Left cardiac atrium (tissue), 4 donors: ENCODE measurements at regions of chr17 and their contacts with region 1.

Region 1: GRCh38 chr17:34542700-34543336 is 36.6 kb upstream of the TMEM132E start:
- DNase-seq: peak; percentile 24
- ATAC-seq: no peak

Region 2: GRCh38 chr17:34337701-34338100 is 205.1 kb before region 1 on chr17:
- intact Hi-C with region 1: no loop called
- DNase-seq: no peak
- ATAC-seq: no peak

Region 3: GRCh38 chr17:34892461-34893249 is 349.8 kb after region 1 on chr17:
- intact Hi-C with region 1: loop called in 1 of 2 experiments (anchors 5 kb)
- DNase-seq: no peak
- ATAC-seq: no peak

Region 4: GRCh38 chr17:35119368-35120165 is 576.7 kb after region 1 on chr17 and contains the start of gene RAD51D:
- intact Hi-C with region 1: loop called (anchors 5 to 10 kb)
- DNase-seq: peak; percentile 73
- ATAC-seq: peak; percentile 97
- total RNA-seq, gene RAD51D: 4.7 to 9.2 TPM